Activated T-helper 1 cell treated with anti-CD3 and anti-CD28 coated beads, Interleukin-12 subunit alpha, Interleukin-12 subunit beta, Interleukin-2, Interleukin-4 antibody, amounts not matched to agents 30 ng/mL and 10 ng/mL and 1 ng/mL, durations not matched to agents 14 hours and 24 hours and 36 hours (primary cell): ENCODE measurements at regions of chr6 and their contacts with region 1.

Region 1: DNA sequence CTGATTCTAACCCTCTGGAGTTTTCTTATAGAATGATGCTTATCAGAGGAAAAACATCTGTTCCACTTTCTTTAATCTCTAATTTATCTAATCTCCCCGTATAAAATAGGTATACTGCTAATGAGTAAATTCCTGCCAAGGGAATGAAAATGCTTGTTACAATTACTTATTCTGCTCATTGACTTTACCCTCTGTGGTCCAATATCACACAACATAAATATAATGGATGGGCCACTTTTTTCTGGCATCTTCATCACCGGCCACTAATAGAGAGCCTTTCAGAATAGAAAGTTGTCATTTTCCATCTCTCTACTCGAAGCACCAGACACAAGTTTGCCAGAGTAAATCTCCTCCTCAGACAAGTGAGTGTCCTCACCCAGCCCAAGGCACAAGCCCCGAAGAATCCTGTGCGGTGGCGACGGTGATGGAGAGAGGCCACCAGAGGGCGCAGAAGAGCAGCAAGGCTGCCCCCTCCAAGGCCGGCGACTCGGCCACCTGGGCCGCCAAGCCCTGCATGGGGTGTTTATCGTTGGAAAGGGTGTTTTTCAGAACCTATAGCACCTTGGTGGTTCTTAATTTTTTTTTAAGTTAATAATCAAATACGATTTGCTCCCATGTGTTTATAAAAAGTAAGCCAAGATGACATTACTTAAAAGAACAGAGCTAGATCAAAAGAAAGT is 212.9 kb upstream of the ARID1B start:
- DNase-seq: peak; percentile 65
- H3K4me3 Mint-ChIP-seq: no peak overlapping the region
- H3K27ac Mint-ChIP-seq: no peak overlapping the region
- H3K4me1 Mint-ChIP-seq: peaks cover 7% of the 10 kb centered on the region
- H3K27me3 Mint-ChIP-seq: peaks cover 3% of the 10 kb centered on the region

Region 2: DNA sequence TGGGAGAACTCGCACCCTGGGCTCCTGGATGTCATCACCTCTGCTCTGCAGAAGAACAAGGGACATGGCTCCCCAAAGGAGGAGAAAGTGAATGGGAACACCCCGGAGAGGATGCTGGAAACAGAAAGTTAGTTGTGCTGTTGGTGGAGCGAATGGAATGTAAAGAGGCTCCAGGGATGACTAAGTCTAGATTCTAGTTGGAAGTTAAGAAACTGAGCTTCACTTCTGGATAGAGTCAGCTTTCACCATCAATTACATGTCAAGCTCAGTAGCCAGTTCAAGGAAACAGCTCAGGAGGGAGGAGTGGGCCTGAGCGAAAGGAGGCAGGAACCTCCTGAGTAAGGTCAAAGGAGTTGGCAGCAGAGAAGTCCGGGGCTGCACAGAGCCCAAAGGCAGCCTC is 80.8 kb after region 1 on chr6:
- intact Hi-C with region 1: no loop called
- DNase-seq: no peak
- H3K4me3 Mint-ChIP-seq: no peak overlapping the region
- H3K27ac Mint-ChIP-seq: no peak overlapping the region
- H3K4me1 Mint-ChIP-seq: peaks cover 11% of the 10 kb centered on the region
- H3K27me3 Mint-ChIP-seq: peaks cover 24% of the 10 kb centered on the region

Region 3: DNA sequence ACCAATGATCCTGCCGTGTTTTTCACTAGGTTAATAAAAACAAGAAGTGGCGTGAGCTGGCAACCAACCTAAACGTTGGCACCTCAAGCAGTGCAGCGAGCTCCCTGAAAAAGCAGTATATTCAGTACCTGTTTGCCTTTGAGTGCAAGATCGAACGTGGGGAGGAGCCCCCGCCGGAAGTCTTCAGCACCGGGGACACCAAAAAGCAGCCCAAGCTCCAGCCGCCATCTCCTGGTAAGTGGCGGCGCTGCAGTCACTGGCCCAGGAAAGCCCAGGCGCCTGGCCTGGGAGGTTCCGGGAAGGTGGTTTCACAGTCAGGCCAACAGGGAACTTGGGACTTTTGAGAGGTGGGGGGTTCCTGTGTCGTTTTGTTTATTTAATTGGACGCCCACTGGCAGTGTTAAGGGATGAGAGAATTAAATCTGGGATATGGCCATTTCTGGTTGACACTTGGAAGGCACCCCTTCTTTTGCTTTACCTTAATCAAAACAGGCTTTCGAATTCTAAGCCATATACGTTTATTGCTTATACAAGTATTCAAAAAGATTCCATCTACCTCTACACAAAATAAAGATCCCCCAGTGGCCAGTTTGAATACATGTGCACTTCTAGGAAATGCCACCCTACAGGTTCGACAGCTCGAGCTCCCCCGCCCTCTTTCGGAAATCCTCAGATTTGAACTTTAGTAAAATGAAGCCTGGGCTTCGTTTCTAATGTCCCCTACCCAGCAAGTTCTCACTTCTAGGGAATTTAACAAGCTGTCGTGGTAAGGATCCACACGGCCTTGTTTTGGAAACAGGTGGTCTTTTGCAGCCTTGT is 620.1 kb after region 1 on chr6:
- intact Hi-C with region 1: loop called (anchors 1 kb)
- DNase-seq: peak; percentile 37
- H3K4me3 Mint-ChIP-seq: no peak overlapping the region
- H3K27ac Mint-ChIP-seq: peak overlapping the region; percentile 64
- H3K4me1 Mint-ChIP-seq: peaks cover 25% of the 10 kb centered on the region
- H3K27me3 Mint-ChIP-seq: no peaks in the 10 kb centered on the region